B cell (primary cell): ENCODE measurements at regions of chr17 and their contacts with region 1.

Region 1: DNA sequence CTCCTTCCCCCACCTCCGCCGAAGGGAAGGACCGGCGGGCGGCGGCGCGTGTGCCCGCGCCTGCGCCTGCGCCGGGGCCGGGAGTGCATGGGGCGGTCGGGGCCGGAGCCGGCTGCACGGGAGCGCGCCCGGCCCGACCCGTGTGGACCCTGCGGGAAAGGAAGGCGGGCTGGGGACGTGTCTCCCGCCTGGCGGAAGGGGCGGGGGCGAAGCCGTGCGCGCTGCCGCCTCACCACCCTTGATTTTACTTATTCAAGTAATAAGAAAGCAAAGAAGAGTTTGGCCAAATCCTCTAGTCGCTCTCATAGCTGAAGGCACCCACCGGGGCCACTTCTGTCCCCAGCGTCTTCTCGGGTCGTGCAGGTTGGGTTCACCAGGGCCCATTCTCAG is 596 bp upstream of the PFN1 start:
- DNase-seq: peak; percentile 90
- ATAC-seq: peak; percentile 50
- H3K4me3 ChIP-seq: peak overlapping the region; percentile 59 to 99 (median 96)
- H3K4me3 Mint-ChIP-seq: peak overlapping the region; percentile 98
- H3K27ac ChIP-seq: peak overlapping the region; percentile 73 to 93
- H3K27ac Mint-ChIP-seq: peak overlapping the region; percentile 99
- H3K4me1 ChIP-seq: peaks cover 37 to 45% of the 10 kb centered on the region in 2 donors
- H3K4me1 Mint-ChIP-seq: peaks cover 46% of the 10 kb centered on the region
- H3K27me3 ChIP-seq: no peaks in the 10 kb centered on the region
- H3K27me3 Mint-ChIP-seq: no peaks in the 10 kb centered on the region
- CTCF ChIP-seq: no peak

Region 2: GRCh38 chr17:4986951-4987766 is 38.2 kb after region 1 on chr17 and contains the start of gene CAMTA2:
- CTCF ChIA-PET with region 1: interaction called, 3 read pairs
- POLR2A ChIA-PET with region 1: interaction called, 3 read pairs
- intact Hi-C with region 1: loop called (anchors 1 kb)
- DNase-seq: peak; percentile 91
- ATAC-seq: peak; percentile 89
- H3K4me3 ChIP-seq: peak within 1 kb of the TSS; percentile 67 to 96 (median 81)
- H3K4me3 Mint-ChIP-seq: peak within 1 kb of the TSS; percentile 91
- H3K27ac ChIP-seq: peak within 1 kb of the TSS; percentile 84 to 90
- H3K27ac Mint-ChIP-seq: peak within 1 kb of the TSS; percentile 90
- H3K4me1 ChIP-seq: peaks cover 21 to 28% of the 10 kb centered on the region in 2 donors
- H3K4me1 Mint-ChIP-seq: peaks cover 35% of the 10 kb centered on the region
- H3K27me3 ChIP-seq: no peaks in the 10 kb centered on the region
- H3K27me3 Mint-ChIP-seq: no peaks in the 10 kb centered on the region
- CTCF ChIP-seq: peak; percentile 88
- total RNA-seq, gene CAMTA2: 57.6 and 57.9 TPM in 2 replicates